Naive thymus-derived CD8-positive, alpha-beta T cell (primary cell): ENCODE measurements at regions of chr12 and their contacts with region 1.

Region 1: DNA sequence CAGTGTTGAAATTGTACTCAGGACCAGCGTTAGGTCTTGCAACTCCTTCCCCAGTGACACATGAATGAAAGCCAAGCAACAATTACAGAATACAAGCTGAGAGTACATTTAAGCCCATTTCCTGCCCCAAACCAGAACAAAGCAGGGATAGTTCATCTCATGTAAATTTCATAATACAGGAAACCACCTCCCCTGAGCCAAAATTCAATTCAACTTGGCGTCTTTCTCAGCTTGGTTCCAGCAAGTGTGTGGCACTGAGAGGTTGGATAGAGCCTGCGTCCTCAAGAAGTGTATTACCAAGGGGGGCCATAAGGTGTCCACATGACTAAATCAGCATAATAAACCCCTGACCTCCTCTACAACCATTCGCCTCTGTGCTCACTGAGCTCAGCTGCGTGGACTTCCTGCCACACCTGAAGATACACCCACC is 278.9 kb upstream of the CRY1 start:
- DNase-seq: peak in 8 of 10 donors; percentile 10 to 77 (median 56)
- ATAC-seq: peak; percentile 73 to 80
- H3K4me3 Mint-ChIP-seq: peak overlapping the region; percentile 39 to 84 (median 76)
- H3K27ac Mint-ChIP-seq: peak overlapping the region; percentile 82 to 97 (median 92)
- H3K4me1 Mint-ChIP-seq: peaks cover 51 to 88% (median 82%) of the 10 kb centered on the region in 4 donors
- H3K27me3 Mint-ChIP-seq: no peaks in the 10 kb centered on the region

Region 2: GRCh38 chr12:107402041-107403022 is 30.1 kb after region 1 on chr12:
- POLR2A ChIA-PET with region 1: interaction called, 10 read pairs
- DNase-seq: peak; percentile 15 to 77 (median 57)
- ATAC-seq: peak; percentile 77 to 78
- H3K4me3 Mint-ChIP-seq: peak overlapping the region in 3 of 10 donors; percentile 26 to 53 (median 45)
- H3K27ac Mint-ChIP-seq: peak overlapping the region in 6 of 10 donors; percentile 55 to 89 (median 86)
- H3K4me1 Mint-ChIP-seq: peaks cover 30 to 57% (median 42%) of the 10 kb centered on the region in 4 donors
- H3K27me3 Mint-ChIP-seq: no peaks in the 10 kb centered on the region

Region 3: DNA sequence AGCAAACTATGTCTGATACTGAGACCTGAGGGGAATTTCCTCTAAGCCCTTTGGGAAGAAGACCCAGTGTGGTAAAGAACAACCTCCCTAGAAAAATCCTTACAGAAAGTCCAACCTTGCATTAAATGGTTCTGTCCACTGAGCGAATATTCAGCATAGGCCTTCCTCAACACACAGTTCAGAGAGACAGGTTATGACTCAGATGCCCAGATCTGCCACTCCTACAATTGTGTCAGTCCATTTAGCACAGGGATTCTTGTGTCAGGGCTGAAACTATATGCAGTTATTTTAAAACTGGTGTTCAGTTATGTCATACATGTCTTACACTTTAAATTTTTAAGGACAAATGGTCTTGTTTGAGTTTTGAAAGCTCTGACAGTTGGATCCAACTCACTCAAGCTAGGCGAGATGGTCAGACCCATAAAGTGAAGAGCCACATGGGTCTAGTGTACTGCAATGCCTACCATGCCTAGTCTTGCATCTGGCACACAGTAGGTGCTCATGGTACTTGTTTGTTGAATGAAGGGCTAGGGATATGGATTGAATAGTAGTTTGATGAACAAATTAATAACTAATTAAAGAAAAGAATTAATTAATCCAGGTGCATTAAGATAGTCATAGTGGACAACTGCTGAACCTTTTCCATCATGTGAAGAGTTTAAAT is 105.8 kb after region 1 on chr12:
- POLR2A ChIA-PET with region 1: no interaction called
- DNase-seq: no peak
- ATAC-seq: no peak
- H3K4me3 Mint-ChIP-seq: no peak overlapping the region
- H3K27ac Mint-ChIP-seq: no peak overlapping the region
- H3K4me1 Mint-ChIP-seq: peaks cover 36 to 71% (median 48%) of the 10 kb centered on the region in 4 donors
- H3K27me3 Mint-ChIP-seq: peaks cover 0 to 2% (median 0%) of the 10 kb centered on the region in 5 donors